ENCODE measurements at regions of chr3 and their contacts with region 1.

Region 1: DNA sequence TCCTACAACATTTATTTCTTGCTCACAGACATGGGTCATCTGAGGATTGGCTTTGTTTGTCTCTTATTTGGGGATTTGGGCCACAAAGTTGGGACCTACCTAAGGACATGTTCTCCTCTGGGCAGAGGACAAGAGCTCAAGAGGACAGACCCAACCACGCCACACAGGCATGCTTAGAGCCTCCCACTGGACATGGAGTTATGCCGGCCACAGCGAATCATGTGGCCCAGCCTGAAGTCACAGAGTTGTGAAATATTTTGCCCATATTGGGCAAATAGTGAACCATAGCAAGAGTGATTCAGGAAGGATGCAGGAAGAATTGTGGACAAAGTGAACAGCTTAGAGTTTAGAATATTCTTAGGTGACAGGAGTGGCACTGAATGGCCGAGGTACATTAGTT is 9.9 kb downstream of the TRAK1 start:
- DNase-seq: peak in 1 of 2 experiments; percentile 21
- ATAC-seq: peak; percentile 47 to 54; a peak in 3 of 6 replicates
- H3K4me3 ChIP-seq: no peak overlapping the region
- H3K27ac ChIP-seq: no peak overlapping the region
- H3K4me1 ChIP-seq: peaks cover 15% of the 10 kb centered on the region; the same call in 1 of the 3 replicates
- CTCF ChIP-seq: no peak
- EP300 ChIP-seq: no peak
- POLR2A ChIP-seq: no peak
- RAD21 ChIP-seq: no peak

Region 2: DNA sequence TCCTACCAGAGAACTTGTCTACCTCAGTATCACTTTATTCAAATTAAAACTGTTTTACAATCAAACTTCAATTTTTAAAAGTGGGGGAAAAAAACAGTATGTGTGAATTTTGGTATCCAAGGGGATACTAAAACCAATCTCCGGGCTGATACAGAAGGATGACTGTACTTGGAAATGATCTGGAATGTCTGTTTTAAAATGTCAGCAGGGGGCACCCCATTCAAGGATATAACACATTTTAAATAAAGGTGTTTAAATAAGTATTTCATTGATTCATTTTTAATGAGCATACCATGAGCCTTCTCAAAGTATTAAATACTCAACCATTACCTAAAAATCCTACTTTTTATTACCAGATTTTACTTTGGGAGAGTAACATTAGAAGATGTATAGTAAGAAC is 207.1 kb before region 1 on chr3:
- CTCF ChIA-PET with region 1: interaction called, 37 read pairs
- POLR2A ChIA-PET with region 1: no interaction called
- DNase-seq: peak; percentile 23 to 47
- ATAC-seq: peak in 1 of 2 experiments; percentile 59; a peak in 1 of 6 replicates
- H3K4me3 ChIP-seq: no peak overlapping the region
- H3K27ac ChIP-seq: no peak overlapping the region
- H3K4me1 ChIP-seq: no peaks in the 10 kb centered on the region
- CTCF ChIP-seq: peak; percentile 70
- EP300 ChIP-seq: no peak
- POLR2A ChIP-seq: no peak
- RAD21 ChIP-seq: peak; percentile 70 to 81

Region 3: GRCh38 chr3:41907330-41908073 is 193.5 kb before region 1 on chr3:
- CTCF ChIA-PET with region 1: interaction called, 37 read pairs
- POLR2A ChIA-PET with region 1: no interaction called
- DNase-seq: no peak
- ATAC-seq: no peak
- H3K4me3 ChIP-seq: no peak overlapping the region
- H3K27ac ChIP-seq: no peak overlapping the region
- H3K4me1 ChIP-seq: no peaks in the 10 kb centered on the region
- CTCF ChIP-seq: no peak
- EP300 ChIP-seq: no peak
- POLR2A ChIP-seq: no peak
- RAD21 ChIP-seq: no peak

Region 4: GRCh38 chr3:42005401-42005800 is 95.6 kb before region 1 on chr3:
- CTCF ChIA-PET with region 1: interaction called, 14 read pairs
- POLR2A ChIA-PET with region 1: no interaction called
- DNase-seq: no peak
- ATAC-seq: no peak
- H3K4me3 ChIP-seq: no peak overlapping the region
- H3K27ac ChIP-seq: no peak overlapping the region
- H3K4me1 ChIP-seq: no peaks in the 10 kb centered on the region
- CTCF ChIP-seq: no peak
- EP300 ChIP-seq: no peak
- POLR2A ChIP-seq: no peak
- RAD21 ChIP-seq: no peak

Region 5: GRCh38 chr3:42020681-42021307 is 80.3 kb before region 1 on chr3:
- CTCF ChIA-PET with region 1: interaction called, 10 read pairs
- POLR2A ChIA-PET with region 1: no interaction called
- DNase-seq: peak in 1 of 2 experiments; percentile 37
- ATAC-seq: peak; percentile 51 to 68; a peak in 3 of 6 replicates
- H3K4me3 ChIP-seq: no peak overlapping the region
- H3K27ac ChIP-seq: peak overlapping the region; percentile 34 to 68; a peak in 4 of 6 replicates
- H3K4me1 ChIP-seq: peaks cover 55% of the 10 kb centered on the region
- CTCF ChIP-seq: no peak
- EP300 ChIP-seq: no peak
- POLR2A ChIP-seq: no peak
- RAD21 ChIP-seq: no peak

Region 6: DNA sequence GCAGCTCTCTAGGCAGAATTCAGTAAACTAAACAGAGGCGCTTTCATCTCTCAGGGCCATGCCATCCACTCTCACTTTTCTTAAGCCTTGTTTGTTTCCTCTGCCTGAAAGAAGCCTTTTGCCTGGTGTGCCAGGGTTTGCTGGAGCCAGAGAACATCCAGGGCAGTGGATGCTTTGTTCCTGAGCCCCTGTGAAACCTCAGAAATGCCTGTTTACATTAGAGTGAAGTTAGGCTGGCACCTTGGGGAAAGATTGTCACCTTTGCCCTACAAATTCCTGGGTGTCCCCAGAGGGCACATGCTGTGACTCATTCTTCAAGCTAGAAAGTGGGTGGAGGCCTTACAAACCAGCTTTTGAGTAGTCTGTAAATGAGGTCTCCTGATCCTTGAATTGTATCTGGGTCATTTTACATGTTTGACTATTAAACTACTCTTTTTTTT is 20.6 kb before region 1 on chr3:
- CTCF ChIA-PET with region 1: interaction called, 24 read pairs
- POLR2A ChIA-PET with region 1: no interaction called
- DNase-seq: peak; percentile 31 to 57
- ATAC-seq: peak; percentile 81 to 90; a peak in 5 of 6 replicates
- H3K4me3 ChIP-seq: no peak overlapping the region
- H3K27ac ChIP-seq: peak overlapping the region; percentile 55 to 78
- H3K4me1 ChIP-seq: peaks cover 31% of the 10 kb centered on the region
- CTCF ChIP-seq: no peak
- EP300 ChIP-seq: no peak
- POLR2A ChIP-seq: no peak
- RAD21 ChIP-seq: no peak

Region 7: DNA sequence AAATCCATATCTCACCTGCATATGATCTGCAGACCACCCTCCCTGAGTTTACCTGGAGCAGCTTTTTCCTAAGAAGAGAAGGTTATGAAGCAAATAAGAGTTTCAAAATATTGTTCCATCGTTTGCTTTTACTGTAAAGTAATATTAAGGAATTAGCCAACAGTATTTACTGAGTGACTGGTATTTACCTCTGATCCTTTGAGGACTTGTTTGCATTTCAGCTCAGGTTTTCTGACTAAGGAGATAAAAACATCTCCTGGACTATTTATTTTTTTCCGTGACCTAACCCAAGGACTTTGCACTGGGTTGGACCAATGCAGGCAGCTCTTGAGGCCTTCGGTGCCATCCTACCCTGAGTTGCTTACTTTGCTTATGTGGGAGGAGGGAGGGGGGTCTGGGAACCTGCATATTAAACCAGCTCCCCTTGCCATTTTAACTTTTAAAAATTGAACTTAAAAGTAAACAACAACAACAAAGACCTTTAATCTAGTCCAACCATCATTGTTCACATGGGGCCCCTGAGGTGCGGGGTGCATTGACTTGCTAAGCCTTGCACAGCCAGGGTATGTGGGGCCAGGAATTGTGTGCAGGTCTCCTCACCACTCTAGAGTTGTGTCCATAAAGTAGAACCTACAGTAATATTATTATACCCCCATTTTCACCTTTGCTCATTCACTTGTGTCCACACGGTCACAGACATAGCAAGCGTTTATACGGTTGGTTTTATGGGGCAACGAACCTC is 29.5 kb after region 1 on chr3:
- CTCF ChIA-PET with region 1: no interaction called
- POLR2A ChIA-PET with region 1: no interaction called
- DNase-seq: peak; percentile 35 to 85
- ATAC-seq: peak; percentile 92 to 93
- H3K4me3 ChIP-seq: no peak overlapping the region
- H3K27ac ChIP-seq: peak overlapping the region; percentile 73 to 78
- H3K4me1 ChIP-seq: peaks cover 35% of the 10 kb centered on the region
- CTCF ChIP-seq: no peak
- EP300 ChIP-seq: peak; percentile 72; a peak in 4 of 5 replicates
- POLR2A ChIP-seq: no peak
- RAD21 ChIP-seq: no peak

Region 8: GRCh38 chr3:42157540-42158538 is 56.8 kb after region 1 on chr3:
- CTCF ChIA-PET with region 1: no interaction called
- POLR2A ChIA-PET with region 1: no interaction called
- DNase-seq: no peak
- ATAC-seq: no peak
- H3K4me3 ChIP-seq: no peak overlapping the region
- H3K27ac ChIP-seq: no peak overlapping the region
- H3K4me1 ChIP-seq: peaks cover 28% of the 10 kb centered on the region
- CTCF ChIP-seq: no peak
- EP300 ChIP-seq: no peak
- POLR2A ChIP-seq: no peak
- RAD21 ChIP-seq: no peak

Region 9: GRCh38 chr3:42190701-42191462 is 89.8 kb after region 1 on chr3:
- CTCF ChIA-PET with region 1: interaction called, 20 read pairs
- POLR2A ChIA-PET with region 1: no interaction called
- DNase-seq: peak; percentile 47 to 61
- ATAC-seq: peak; percentile 90 to 95
- H3K4me3 ChIP-seq: no peak overlapping the region
- H3K27ac ChIP-seq: 0 out of 6 replicates have a peak overlapping the region, but pooled peaks of 1 of the 2 experiments have one; percentile 35
- H3K4me1 ChIP-seq: no peaks in the 10 kb centered on the region
- CTCF ChIP-seq: peak; percentile 78
- EP300 ChIP-seq: no peak
- POLR2A ChIP-seq: no peak
- RAD21 ChIP-seq: peak; percentile 73 to 74